PC-9 (cell line): ENCODE measurements at regions of chr2 and their contacts with region 1.

Region 1: GRCh38 chr2:135985018-135985825 is at the start of gene DARS1:
- DNase-seq: peak; percentile 85 to 89
- H3K4me3 ChIP-seq: peak within 1 kb of the TSS; percentile 85
- H3K27ac ChIP-seq: peak within 1 kb of the TSS; percentile 93
- H3K4me1 ChIP-seq: peaks cover 15% of the 10 kb centered on the region
- H3K27me3 ChIP-seq: no peaks in the 10 kb centered on the region
- CTCF ChIP-seq: no peak
- total RNA-seq, gene DARS1: 54.3 and 63.0 TPM in 2 replicates

Region 2: GRCh38 chr2:135709992-135710391 is 275.2 kb before region 1 on chr2:
- CTCF ChIA-PET with region 1: no interaction called
- POLR2A ChIA-PET with region 1: no interaction called
- intact Hi-C with region 1: no loop called
- DNase-seq: peak in 1 of 2 experiments; percentile 53
- H3K4me3 ChIP-seq: no peak overlapping the region
- H3K27ac ChIP-seq: no peak overlapping the region
- H3K4me1 ChIP-seq: no peaks in the 10 kb centered on the region
- H3K27me3 ChIP-seq: no peaks in the 10 kb centered on the region
- CTCF ChIP-seq: peak; percentile 96

Region 3: DNA sequence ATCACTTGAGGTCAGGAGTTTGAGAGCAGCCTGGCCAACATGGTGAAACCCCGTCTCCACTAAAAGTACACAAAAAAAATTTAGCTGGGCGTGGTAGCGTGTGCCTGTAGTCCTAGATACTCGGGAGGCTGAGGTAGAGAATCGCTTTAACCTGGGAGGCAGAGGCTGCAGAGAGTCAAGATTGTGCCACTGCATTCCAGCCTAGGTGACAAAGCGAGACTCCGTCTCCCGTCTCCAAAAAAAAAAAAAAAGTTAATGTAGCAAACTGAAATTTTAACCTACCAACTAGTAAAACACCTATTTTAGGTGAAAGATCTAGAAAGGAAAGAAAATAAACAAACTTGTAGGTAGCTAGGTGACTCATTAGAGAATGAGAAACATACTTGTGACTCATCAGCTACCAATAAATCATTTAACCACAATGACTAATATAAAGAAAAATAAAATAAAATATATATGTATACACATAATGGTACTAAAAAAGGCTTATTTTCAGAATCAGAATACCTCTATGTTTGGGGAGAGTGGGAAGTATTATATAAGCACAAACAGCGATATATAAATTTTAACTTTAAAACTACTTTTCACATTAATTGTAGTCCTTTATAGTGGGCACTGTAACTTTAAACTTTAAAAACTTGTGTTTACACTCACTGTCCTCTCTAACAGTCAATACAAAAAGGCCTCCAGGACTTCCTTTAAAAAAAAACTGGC is 36.4 kb before region 1 on chr2:
- CTCF ChIA-PET with region 1: no interaction called
- POLR2A ChIA-PET with region 1: no interaction called
- intact Hi-C with region 1: loop called (anchors 1 kb)
- DNase-seq: peak; percentile 75 to 95
- H3K4me3 ChIP-seq: peak overlapping the region; percentile 36; the same call in 1 of the 2 replicates
- H3K27ac ChIP-seq: peak overlapping the region; percentile 93
- H3K4me1 ChIP-seq: peaks cover 41% of the 10 kb centered on the region
- H3K27me3 ChIP-seq: no peaks in the 10 kb centered on the region
- CTCF ChIP-seq: no peak

Region 4: GRCh38 chr2:136117909-136118818 is 132.9 kb after region 1 on chr2 and contains the start of gene CXCR4:
- CTCF ChIA-PET with region 1: no interaction called
- POLR2A ChIA-PET with region 1: no interaction called
- intact Hi-C with region 1: loop called (anchors 5 kb)
- DNase-seq: peak in 1 of 2 experiments; percentile 37
- H3K4me3 ChIP-seq: no peak within 1 kb of the TSS
- H3K27ac ChIP-seq: no peak within 1 kb of the TSS
- H3K4me1 ChIP-seq: no peaks in the 10 kb centered on the region
- H3K27me3 ChIP-seq: no peaks in the 10 kb centered on the region
- CTCF ChIP-seq: no peak
- total RNA-seq, gene CXCR4: 0.70 and 1.1 TPM in 2 replicates

Region 5: DNA sequence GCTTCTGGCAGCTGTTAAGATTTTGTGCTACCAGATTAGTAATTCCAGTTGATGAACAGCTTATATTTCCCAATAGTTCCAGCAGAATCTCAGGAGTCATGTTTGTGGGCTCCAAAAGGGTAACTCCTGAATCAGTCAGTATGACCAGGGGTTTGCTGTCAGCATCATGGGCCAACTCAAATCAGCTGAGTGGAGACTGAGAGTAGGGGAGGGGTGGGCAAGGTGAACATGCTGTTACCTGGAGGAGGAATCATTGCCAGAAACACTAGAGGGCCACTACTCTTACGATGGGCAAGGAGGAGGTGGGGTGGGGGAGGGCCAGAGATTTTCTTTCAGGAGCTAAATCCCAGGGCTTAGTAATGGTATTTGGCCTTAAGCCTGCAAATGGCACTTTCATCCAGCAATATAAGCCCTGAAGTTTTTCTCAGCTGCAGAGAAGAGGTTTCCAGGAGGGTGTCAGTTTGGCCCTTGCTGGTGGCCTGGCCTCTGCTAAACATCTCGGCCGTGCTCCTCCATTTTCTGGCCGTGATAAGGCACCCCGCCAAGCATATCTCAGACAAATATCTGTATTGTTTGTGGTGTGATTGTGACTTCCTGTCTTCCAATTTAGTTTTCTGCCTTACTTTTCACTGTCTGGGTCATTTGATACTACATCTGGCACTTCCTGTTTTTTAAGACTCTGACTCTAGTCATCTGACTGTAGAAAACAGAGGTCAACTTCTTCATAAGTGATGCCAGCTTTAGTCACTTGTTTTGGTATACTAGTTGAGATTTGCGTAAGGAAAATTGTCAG is 253.3 kb after region 1 on chr2:
- CTCF ChIA-PET with region 1: no interaction called
- POLR2A ChIA-PET with region 1: interaction called, 4 read pairs
- intact Hi-C with region 1: loop called (anchors 10 kb)
- DNase-seq: peak; percentile 23 to 56
- H3K4me3 ChIP-seq: no peak overlapping the region
- H3K27ac ChIP-seq: peak overlapping the region; percentile 65
- H3K4me1 ChIP-seq: peaks cover 41% of the 10 kb centered on the region
- H3K27me3 ChIP-seq: no peaks in the 10 kb centered on the region
- CTCF ChIP-seq: no peak

Region 6: GRCh38 chr2:136378712-136379595 is 393.7 kb after region 1 on chr2:
- CTCF ChIA-PET with region 1: no interaction called
- POLR2A ChIA-PET with region 1: no interaction called
- intact Hi-C with region 1: loop called (anchors 5 kb)
- DNase-seq: peak in 1 of 2 experiments; percentile 36
- H3K4me3 ChIP-seq: no peak overlapping the region
- H3K27ac ChIP-seq: no peak overlapping the region
- H3K4me1 ChIP-seq: no peaks in the 10 kb centered on the region
- H3K27me3 ChIP-seq: no peaks in the 10 kb centered on the region
- CTCF ChIP-seq: peak; percentile 79